CD8-positive, alpha-beta T cell (primary cell): ENCODE measurements at regions of chr10 and their contacts with region 1.

Region 1: GRCh38 chr10:102641880-102642735 is 2.2 kb upstream of the TRIM8 start:
- DNase-seq: peak; percentile 94 to 99 (median 98)
- ATAC-seq: peak; percentile 69
- H3K4me3 ChIP-seq: peak overlapping the region; percentile 67 to 81
- H3K4me3 Mint-ChIP-seq: peak overlapping the region; percentile 91
- H3K27ac ChIP-seq: peak overlapping the region; percentile 71 to 94
- H3K27ac Mint-ChIP-seq: peak overlapping the region; percentile 96
- H3K4me1 ChIP-seq: peaks cover 12% of the 10 kb centered on the region
- H3K4me1 Mint-ChIP-seq: peaks cover 26% of the 10 kb centered on the region
- H3K27me3 ChIP-seq: no peaks in the 10 kb centered on the region
- H3K27me3 Mint-ChIP-seq: no peaks in the 10 kb centered on the region
- CTCF ChIP-seq: no peak

Region 2: DNA sequence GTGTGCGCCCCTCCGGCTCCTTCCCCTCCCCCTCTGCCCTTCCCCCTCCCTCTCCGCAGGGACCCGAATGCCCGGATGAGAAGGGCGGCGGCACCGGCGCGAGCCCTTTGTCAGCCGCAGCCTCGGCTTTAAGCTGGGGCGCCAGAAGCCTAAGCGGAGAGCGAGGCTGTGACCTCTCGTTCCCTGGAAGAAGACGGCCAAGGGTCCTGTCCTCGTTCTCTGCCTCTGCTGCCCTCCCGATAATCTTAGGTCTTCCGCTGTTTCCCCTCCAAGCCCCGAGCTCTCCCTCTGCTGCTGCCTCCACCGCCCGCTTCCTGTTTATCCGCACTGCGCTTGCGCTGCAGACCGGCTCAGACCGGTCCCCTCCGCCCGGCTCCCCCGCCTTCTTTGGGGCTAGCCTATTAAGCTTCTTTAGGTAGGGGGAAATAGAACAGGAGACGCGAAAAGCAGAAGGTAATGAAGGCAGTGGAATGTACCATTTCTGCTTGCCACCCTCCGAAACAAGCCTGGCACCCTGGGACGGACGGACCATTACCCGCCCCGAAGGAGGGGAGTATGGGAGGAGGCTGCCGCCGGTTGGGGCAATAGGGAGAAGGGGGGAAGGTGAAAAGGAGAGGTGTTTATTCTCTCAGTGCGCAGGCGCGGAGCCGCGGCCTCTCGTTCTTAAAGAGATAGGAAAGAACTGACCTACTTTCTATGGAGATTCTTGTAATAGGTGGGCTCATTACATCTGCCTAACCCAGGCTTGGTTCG is 823.8 kb before region 1 on chr10 and contains the start of gene OGA:
- CTCF ChIA-PET with region 1: no interaction called
- POLR2A ChIA-PET with region 1: interaction called, 3 read pairs
- intact Hi-C with region 1: loop called (anchors 5 to 10 kb)
- DNase-seq: peak; percentile 94 to 100 (median 98)
- ATAC-seq: peak; percentile 90
- H3K4me3 ChIP-seq: peak within 1 kb of the TSS; percentile 78 to 82
- H3K4me3 Mint-ChIP-seq: peak within 1 kb of the TSS; percentile 98
- H3K27ac ChIP-seq: peak within 1 kb of the TSS; percentile 81 to 90
- H3K27ac Mint-ChIP-seq: peak within 1 kb of the TSS; percentile 97
- H3K4me1 ChIP-seq: peaks cover 32% of the 10 kb centered on the region
- H3K4me1 Mint-ChIP-seq: peaks cover 51% of the 10 kb centered on the region
- H3K27me3 ChIP-seq: no peaks in the 10 kb centered on the region
- H3K27me3 Mint-ChIP-seq: no peaks in the 10 kb centered on the region
- CTCF ChIP-seq: no peak
- total RNA-seq, gene OGA: 356 to 394 TPM

Region 3: GRCh38 chr10:102450194-102450938 is 191.7 kb before region 1 on chr10:
- CTCF ChIA-PET with region 1: no interaction called
- POLR2A ChIA-PET with region 1: interaction called, 4 read pairs
- intact Hi-C with region 1: loop called (anchors 1 to 5 kb)
- DNase-seq: peak; percentile 78 to 98 (median 89)
- ATAC-seq: peak; percentile 77
- H3K4me3 ChIP-seq: peak overlapping the region; percentile 73 to 92
- H3K4me3 Mint-ChIP-seq: peak overlapping the region; percentile 92
- H3K27ac ChIP-seq: peak overlapping the region; percentile 76 to 88
- H3K27ac Mint-ChIP-seq: peak overlapping the region; percentile 94
- H3K4me1 ChIP-seq: peaks cover 16% of the 10 kb centered on the region
- H3K4me1 Mint-ChIP-seq: peaks cover 23% of the 10 kb centered on the region
- H3K27me3 ChIP-seq: no peaks in the 10 kb centered on the region
- H3K27me3 Mint-ChIP-seq: no peaks in the 10 kb centered on the region
- CTCF ChIP-seq: no peak

Region 4: GRCh38 chr10:102660888-102661657 is 19.0 kb after region 1 on chr10:
- CTCF ChIA-PET with region 1: interaction called, 12 read pairs
- POLR2A ChIA-PET with region 1: interaction called, 60 read pairs
- intact Hi-C with region 1: no loop called
- DNase-seq: peak in 7 of 9 experiments; percentile 46 to 79 (median 60)
- ATAC-seq: peak; percentile 75
- H3K4me3 ChIP-seq: peak overlapping the region; percentile 40 to 41
- H3K4me3 Mint-ChIP-seq: peak overlapping the region; percentile 75
- H3K27ac ChIP-seq: peak overlapping the region; percentile 33 to 62
- H3K27ac Mint-ChIP-seq: peak overlapping the region; percentile 92
- H3K4me1 ChIP-seq: peaks cover 43% of the 10 kb centered on the region
- H3K4me1 Mint-ChIP-seq: peaks cover 40% of the 10 kb centered on the region
- H3K27me3 ChIP-seq: no peaks in the 10 kb centered on the region
- H3K27me3 Mint-ChIP-seq: no peaks in the 10 kb centered on the region
- CTCF ChIP-seq: no peak

Region 5: GRCh38 chr10:102743588-102744373 is 101.7 kb after region 1 on chr10 and contains the start of gene WBP1L:
- CTCF ChIA-PET with region 1: interaction called, 5 read pairs
- POLR2A ChIA-PET with region 1: interaction called, 20 read pairs
- intact Hi-C with region 1: loop called (anchors 1 kb)
- DNase-seq: peak; percentile 90 to 99 (median 95)
- ATAC-seq: peak; percentile 96
- H3K4me3 ChIP-seq: peak within 1 kb of the TSS; percentile 87 to 99
- H3K4me3 Mint-ChIP-seq: peak within 1 kb of the TSS; percentile 92
- H3K27ac ChIP-seq: peak within 1 kb of the TSS; percentile 64 to 91
- H3K27ac Mint-ChIP-seq: peak within 1 kb of the TSS; percentile 90
- H3K4me1 ChIP-seq: peaks cover 34% of the 10 kb centered on the region
- H3K4me1 Mint-ChIP-seq: peaks cover 50% of the 10 kb centered on the region
- H3K27me3 ChIP-seq: no peaks in the 10 kb centered on the region
- H3K27me3 Mint-ChIP-seq: no peaks in the 10 kb centered on the region
- CTCF ChIP-seq: no peak
- total RNA-seq, gene WBP1L: 5.5 to 5.9 TPM